ENCODE measurements at regions of chr2 and their contacts with region 1.

Region 1: DNA sequence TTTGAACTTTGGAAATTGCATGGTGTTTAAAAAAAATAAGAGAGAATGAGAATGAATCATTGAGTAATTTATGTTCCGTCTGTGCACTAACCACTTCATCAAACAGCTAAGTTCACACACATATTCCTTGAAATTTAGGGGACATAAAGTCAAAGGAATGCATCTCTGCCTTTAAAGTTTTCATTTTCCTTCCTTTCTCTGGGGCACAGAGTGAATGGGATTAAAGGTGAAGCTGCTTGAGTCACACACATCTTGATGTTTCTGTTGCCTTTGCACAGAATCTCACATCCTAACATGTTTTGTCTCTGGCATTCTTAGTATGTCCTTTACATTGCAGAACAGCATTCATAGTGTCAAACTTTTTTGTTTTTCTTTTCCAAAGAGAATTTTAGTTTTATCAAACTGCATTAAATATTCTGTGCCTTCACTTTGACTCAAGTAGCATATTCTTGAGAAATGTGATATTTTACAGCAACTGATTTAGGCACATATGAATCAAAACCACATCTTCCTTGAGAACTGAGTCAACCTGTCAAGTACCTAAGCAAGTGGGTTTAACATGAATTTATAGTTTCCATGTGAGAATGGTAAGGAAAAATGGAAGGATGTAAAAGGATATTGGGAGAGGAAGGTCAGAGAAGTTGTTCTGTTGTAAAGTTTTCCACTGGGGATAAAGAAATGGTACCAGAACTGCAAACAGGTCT is 169.1 kb upstream of the THUMPD2 start:
- DNase-seq: no peak
- H3K4me3 Mint-ChIP-seq: no peak overlapping the region
- H3K27ac Mint-ChIP-seq: peak overlapping the region; percentile 81
- H3K4me1 Mint-ChIP-seq: peaks cover 29% of the 10 kb centered on the region
- H3K27me3 Mint-ChIP-seq: no peaks in the 10 kb centered on the region

Region 2: DNA sequence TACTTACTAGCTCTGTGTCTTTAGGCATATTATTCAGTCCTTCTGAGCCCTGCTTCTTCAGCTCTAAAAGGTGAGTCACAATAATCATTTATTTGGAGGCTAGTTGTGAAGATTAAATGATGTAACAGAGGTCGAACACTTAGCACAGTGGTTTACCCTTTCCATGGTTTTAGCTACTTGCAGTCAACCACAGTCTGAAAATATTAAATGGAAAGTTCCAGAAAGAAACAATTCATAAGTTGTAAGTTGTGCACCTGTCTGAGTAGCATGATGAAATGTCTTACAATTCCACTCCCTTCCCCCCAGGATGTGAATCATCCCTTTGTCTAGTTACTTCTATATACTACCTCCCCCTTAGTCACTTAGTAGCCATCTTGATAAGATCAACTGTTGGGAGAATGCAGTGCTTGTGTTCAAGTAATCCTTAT is 48.5 kb after region 1 on chr2:
- intact Hi-C with region 1: loop called (anchors 1 kb)
- DNase-seq: no peak
- H3K4me3 Mint-ChIP-seq: no peak overlapping the region
- H3K27ac Mint-ChIP-seq: peak overlapping the region; percentile 18
- H3K4me1 Mint-ChIP-seq: peaks cover 17% of the 10 kb centered on the region
- H3K27me3 Mint-ChIP-seq: peaks cover 1% of the 10 kb centered on the region

Region 3: GRCh38 chr2:40032650-40033319 is 84.6 kb after region 1 on chr2:
- intact Hi-C with region 1: loop called (anchors 2 kb)
- DNase-seq: no peak
- H3K4me3 Mint-ChIP-seq: no peak overlapping the region
- H3K27ac Mint-ChIP-seq: peak overlapping the region; percentile 54
- H3K4me1 Mint-ChIP-seq: peaks cover 9% of the 10 kb centered on the region
- H3K27me3 Mint-ChIP-seq: no peaks in the 10 kb centered on the region

Region 4: GRCh38 chr2:40062381-40062780 is 114.2 kb after region 1 on chr2:
- intact Hi-C with region 1: no loop called
- DNase-seq: no peak
- H3K4me3 Mint-ChIP-seq: no peak overlapping the region
- H3K27ac Mint-ChIP-seq: no peak overlapping the region
- H3K4me1 Mint-ChIP-seq: no peaks in the 10 kb centered on the region
- H3K27me3 Mint-ChIP-seq: no peaks in the 10 kb centered on the region

Region 5: GRCh38 chr2:40212804-40213470 is 264.8 kb after region 1 on chr2:
- intact Hi-C with region 1: loop called (anchors 5 kb)
- DNase-seq: no peak
- H3K4me3 Mint-ChIP-seq: no peak overlapping the region
- H3K27ac Mint-ChIP-seq: no peak overlapping the region
- H3K4me1 Mint-ChIP-seq: peaks cover 4% of the 10 kb centered on the region
- H3K27me3 Mint-ChIP-seq: no peaks in the 10 kb centered on the region